ENCODE measurements at regions of chr7 and their contacts with region 1.

Region 1: DNA sequence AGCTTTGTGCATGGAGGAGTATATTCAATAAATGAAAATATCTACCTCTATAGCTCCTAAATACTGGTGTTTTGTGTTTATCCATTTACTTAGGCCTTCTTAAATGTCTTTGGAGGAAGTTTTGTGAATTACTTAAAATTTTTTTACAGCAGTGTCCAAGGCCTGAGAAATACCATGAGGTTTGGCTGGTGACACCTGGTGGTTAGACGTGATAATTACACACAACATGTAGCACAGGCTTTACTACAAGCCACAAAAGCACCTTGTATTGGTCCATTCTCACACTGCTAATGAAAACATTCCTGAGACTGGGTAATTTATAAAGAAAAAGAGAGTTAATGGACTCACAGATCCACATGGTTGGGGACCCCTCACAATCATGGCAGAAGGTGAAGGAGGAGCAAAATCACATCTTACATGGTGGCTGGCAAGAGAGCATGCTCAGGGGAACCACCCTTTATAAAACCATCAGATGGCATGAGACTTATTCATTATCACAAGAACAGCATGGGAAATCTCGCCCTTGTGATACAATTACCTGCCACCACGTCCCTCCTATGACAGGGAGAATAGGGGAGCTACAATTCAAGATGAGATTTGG is 20.6 kb downstream of the HYAL4 start:
- DNase-seq: no peak
- ATAC-seq: peak; percentile 90

Region 2: GRCh38 chr7:123580406-123581161 is 285.0 kb before region 1 on chr7:
- intact Hi-C with region 1: loop called (anchors 10 kb)
- DNase-seq: no peak
- ATAC-seq: peak; percentile 84

Region 3: GRCh38 chr7:123689250-123689649 is 176.4 kb before region 1 on chr7:
- intact Hi-C with region 1: loop called (anchors 5 kb)
- DNase-seq: no peak
- ATAC-seq: no peak